ENCODE measurements at regions of chr7 and their contacts with region 1.

Region 1: GRCh38 chr7:107462740-107463444 is 7.0 kb upstream of the GPR22 start:
- DNase-seq: peak; percentile 58 to 69
- H3K4me3 ChIP-seq: no peak overlapping the region
- H3K27ac ChIP-seq: peak overlapping the region; percentile 3 to 16
- H3K4me1 ChIP-seq: no peaks in the 10 kb centered on the region
- H3K27me3 ChIP-seq: no peaks in the 10 kb centered on the region
- CTCF ChIP-seq: peak; percentile 72 to 89 (median 82)
- POLR2A ChIP-seq: no peak

Region 2: GRCh38 chr7:107725151-107725740 is 262.4 kb after region 1 on chr7:
- intact Hi-C with region 1: loop called (anchors 10 kb)
- DNase-seq: peak; percentile 25 to 61
- H3K4me3 ChIP-seq: no peak overlapping the region
- H3K27ac ChIP-seq: no peak overlapping the region
- H3K4me1 ChIP-seq: no peaks in the 10 kb centered on the region
- H3K27me3 ChIP-seq: no peaks in the 10 kb centered on the region
- CTCF ChIP-seq: peak; percentile 48 to 80 (median 72)
- POLR2A ChIP-seq: no peak